Activated CD4-positive, alpha-beta T cell treated with anti-CD3 and anti-CD28 coated beads for 36 hours (primary cell): ENCODE measurements at regions of chr2 and their contacts with region 1.

Region 1: DNA sequence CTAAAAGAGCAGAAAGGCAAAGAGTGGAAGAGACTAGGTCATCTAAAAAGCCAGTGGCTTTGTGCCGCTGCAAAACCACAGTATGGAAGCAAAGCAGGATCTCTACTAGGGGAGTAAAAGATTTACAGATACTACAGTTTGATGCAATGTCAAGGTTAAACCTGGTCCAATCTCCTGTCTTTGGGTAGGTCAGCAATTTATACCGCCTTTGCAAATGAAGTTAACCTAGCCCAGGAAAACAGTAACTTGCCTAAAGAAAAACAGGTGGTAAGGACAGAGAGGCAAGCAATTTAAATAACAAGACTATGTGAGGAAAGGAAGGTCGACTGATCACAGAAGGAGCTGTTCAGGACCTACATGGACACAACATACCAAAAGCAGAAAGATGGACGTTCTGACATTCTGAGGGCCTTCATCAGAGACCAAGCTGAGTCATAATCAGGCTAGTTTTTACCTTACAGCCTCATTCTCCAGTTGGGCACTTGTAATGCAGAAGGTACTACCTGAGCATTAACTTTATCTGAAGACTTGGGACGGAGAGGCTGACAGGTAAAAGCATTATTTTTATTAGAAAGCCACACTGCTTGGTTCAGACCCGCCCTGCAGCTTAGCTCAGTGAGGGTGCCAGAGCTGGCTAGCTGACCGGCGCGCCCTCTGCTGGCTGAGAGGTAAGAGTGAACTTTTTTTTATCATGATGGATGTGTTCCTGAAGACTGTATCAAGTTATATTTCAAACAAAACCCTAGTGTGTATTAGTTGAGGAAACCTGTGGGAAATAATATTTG is 15.9 kb downstream of the CDKL4 start:
- DNase-seq: peak; percentile 91
- ATAC-seq: peak; percentile 83
- H3K4me3 Mint-ChIP-seq: peak overlapping the region; percentile 49
- H3K27ac Mint-ChIP-seq: peak overlapping the region; percentile 40
- H3K4me1 Mint-ChIP-seq: peaks cover 32% of the 10 kb centered on the region
- H3K27me3 Mint-ChIP-seq: peaks cover 6% of the 10 kb centered on the region

Region 2: GRCh38 chr2:38959938-38960608 is 267.7 kb before region 1 on chr2:
- CTCF ChIA-PET with region 1: interaction called, 4 read pairs
- POLR2A ChIA-PET with region 1: no interaction called
- intact Hi-C with region 1: loop called in 1 of 2 experiments (anchors 5 kb)
- DNase-seq: peak; percentile 87
- ATAC-seq: peak; percentile 100
- H3K4me3 Mint-ChIP-seq: peak overlapping the region; percentile 36
- H3K27ac Mint-ChIP-seq: no peak overlapping the region
- H3K4me1 Mint-ChIP-seq: peaks cover 2% of the 10 kb centered on the region
- H3K27me3 Mint-ChIP-seq: peaks cover 18% of the 10 kb centered on the region

Region 3: GRCh38 chr2:39059366-39059952 is 168.4 kb before region 1 on chr2:
- CTCF ChIA-PET with region 1: interaction called, 322 read pairs
- POLR2A ChIA-PET with region 1: interaction called, 3 read pairs
- intact Hi-C with region 1: loop called (anchors 1 kb)
- DNase-seq: no peak
- ATAC-seq: peak; percentile 36
- H3K4me3 Mint-ChIP-seq: no peak overlapping the region
- H3K27ac Mint-ChIP-seq: no peak overlapping the region
- H3K4me1 Mint-ChIP-seq: no peaks in the 10 kb centered on the region
- H3K27me3 Mint-ChIP-seq: no peaks in the 10 kb centered on the region

Region 4: GRCh38 chr2:39080152-39080551 is 147.7 kb before region 1 on chr2:
- CTCF ChIA-PET with region 1: interaction called, 25 read pairs
- POLR2A ChIA-PET with region 1: no interaction called
- intact Hi-C with region 1: no loop called
- DNase-seq: no peak
- ATAC-seq: no peak
- H3K4me3 Mint-ChIP-seq: no peak overlapping the region
- H3K27ac Mint-ChIP-seq: no peak overlapping the region
- H3K4me1 Mint-ChIP-seq: peaks cover 21% of the 10 kb centered on the region
- H3K27me3 Mint-ChIP-seq: no peaks in the 10 kb centered on the region

Region 5: DNA sequence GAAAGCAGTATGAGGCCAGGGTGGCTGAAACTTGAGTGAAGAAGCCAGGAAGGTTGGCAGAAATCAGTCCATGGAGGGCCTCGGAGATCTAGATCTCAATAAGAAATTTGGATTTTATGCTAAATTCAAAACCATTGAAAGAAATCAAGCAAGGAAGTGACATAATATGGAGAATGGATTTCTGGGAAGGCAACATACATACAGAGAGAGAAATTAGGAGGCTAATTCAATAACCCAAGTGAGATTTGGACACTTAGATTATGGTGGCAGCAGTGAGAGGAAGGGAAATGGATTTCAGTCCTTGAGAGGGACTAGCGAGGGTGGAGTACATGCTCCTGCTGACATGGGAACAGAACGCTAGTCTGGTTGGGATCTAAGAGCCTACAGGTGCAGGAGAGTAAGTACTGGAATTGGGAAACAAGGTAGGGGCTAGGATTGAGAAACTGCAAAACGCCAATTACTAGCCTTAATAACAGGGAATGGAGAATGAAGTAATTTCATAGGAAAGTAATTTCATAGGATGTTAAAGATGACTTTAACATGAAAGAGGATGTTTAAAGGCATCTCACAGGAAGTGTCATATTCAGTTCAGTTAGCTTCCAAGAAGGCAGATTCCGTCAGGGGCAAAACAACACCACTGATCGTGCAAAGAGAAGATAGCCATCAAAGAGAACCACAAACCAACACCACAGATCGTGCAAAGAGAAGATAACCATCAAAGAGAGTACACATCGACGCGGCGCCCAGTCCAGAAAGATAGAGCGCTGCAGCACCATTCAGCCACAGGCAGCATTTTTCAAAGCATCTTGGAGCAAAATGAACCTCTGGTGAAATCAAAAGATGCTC is 11.3 kb before region 1 on chr2:
- CTCF ChIA-PET with region 1: interaction called, 32 read pairs
- POLR2A ChIA-PET with region 1: no interaction called
- intact Hi-C with region 1: loop called (anchors 1 kb)
- DNase-seq: peak; percentile 76
- ATAC-seq: peak; percentile 70
- H3K4me3 Mint-ChIP-seq: peak overlapping the region; percentile 45
- H3K27ac Mint-ChIP-seq: peak overlapping the region; percentile 88
- H3K4me1 Mint-ChIP-seq: peaks cover 44% of the 10 kb centered on the region
- H3K27me3 Mint-ChIP-seq: no peaks in the 10 kb centered on the region